Mammary epithelial cell (primary cell): ENCODE measurements at regions of chr22 and their contacts with region 1.

Region 1: GRCh38 chr22:44448271-44448830 is 49.7 kb downstream of the RTL6 start:
- DNase-seq: peak; percentile 88
- H3K4me3 ChIP-seq: no peak overlapping the region
- H3K27ac ChIP-seq: peak overlapping the region; percentile 60
- H3K4me1 ChIP-seq: peaks cover 23% of the 10 kb centered on the region
- H3K27me3 ChIP-seq: no peaks in the 10 kb centered on the region
- CTCF ChIP-seq: no peak

Region 2: DNA sequence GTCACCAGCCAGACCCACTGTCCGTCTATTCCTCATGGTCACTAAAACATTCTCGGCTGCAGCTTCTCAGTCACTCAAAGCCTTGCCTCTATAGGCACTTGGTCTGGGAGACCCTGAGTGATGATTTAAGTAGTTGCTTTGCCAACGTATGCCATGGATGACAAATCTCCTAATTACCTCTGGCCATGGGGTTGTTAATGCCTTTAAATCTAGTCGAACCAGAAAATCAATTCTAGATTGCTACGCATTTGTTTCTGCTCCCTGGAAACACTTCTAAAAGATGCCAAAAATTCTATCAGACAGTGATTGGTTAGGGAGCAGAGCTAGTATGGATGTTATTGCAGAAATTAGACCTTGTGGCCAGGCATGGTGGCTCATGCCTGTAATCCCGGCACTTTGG is 106.7 kb after region 1 on chr22:
- CTCF ChIA-PET with region 1: no interaction called
- dilution Hi-C with region 1: no loop called
- in situ Hi-C with region 1: no loop called
- intact Hi-C with region 1: loop called (anchors 5 kb)
- DNase-seq: no peak
- H3K4me3 ChIP-seq: no peak overlapping the region
- H3K27ac ChIP-seq: no peak overlapping the region
- H3K4me1 ChIP-seq: peaks cover 11% of the 10 kb centered on the region
- H3K27me3 ChIP-seq: peaks cover 2% of the 10 kb centered on the region
- CTCF ChIP-seq: no peak

Region 3: DNA sequence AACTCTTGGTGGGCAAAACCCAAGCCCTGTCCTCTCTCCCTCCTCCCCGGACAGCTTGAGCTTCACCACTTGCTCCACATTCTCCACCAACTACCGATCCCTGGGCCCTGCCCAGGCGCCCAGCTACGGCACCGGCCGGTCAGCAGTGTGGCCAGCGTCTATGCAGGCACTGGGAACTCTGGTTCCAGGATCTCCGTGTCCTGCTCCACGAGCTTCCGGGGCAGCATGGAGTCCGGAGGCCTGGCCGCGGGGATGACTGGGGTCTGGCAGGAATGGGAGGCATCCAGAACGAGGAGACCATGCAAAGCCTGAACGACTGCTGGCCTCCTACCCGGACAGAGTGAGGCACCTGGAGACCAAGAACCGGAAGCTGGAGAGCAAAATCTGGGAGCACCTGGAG is 118.6 kb after region 1 on chr22:
- CTCF ChIA-PET with region 1: no interaction called
- dilution Hi-C with region 1: no loop called
- in situ Hi-C with region 1: no loop called
- intact Hi-C with region 1: no loop called
- DNase-seq: no peak
- H3K4me3 ChIP-seq: no peak overlapping the region
- H3K27ac ChIP-seq: no peak overlapping the region
- H3K4me1 ChIP-seq: peaks cover 8% of the 10 kb centered on the region
- H3K27me3 ChIP-seq: no peaks in the 10 kb centered on the region
- CTCF ChIP-seq: no peak